ENCODE measurements at regions of chr9 and their contacts with region 1.

Region 1: DNA sequence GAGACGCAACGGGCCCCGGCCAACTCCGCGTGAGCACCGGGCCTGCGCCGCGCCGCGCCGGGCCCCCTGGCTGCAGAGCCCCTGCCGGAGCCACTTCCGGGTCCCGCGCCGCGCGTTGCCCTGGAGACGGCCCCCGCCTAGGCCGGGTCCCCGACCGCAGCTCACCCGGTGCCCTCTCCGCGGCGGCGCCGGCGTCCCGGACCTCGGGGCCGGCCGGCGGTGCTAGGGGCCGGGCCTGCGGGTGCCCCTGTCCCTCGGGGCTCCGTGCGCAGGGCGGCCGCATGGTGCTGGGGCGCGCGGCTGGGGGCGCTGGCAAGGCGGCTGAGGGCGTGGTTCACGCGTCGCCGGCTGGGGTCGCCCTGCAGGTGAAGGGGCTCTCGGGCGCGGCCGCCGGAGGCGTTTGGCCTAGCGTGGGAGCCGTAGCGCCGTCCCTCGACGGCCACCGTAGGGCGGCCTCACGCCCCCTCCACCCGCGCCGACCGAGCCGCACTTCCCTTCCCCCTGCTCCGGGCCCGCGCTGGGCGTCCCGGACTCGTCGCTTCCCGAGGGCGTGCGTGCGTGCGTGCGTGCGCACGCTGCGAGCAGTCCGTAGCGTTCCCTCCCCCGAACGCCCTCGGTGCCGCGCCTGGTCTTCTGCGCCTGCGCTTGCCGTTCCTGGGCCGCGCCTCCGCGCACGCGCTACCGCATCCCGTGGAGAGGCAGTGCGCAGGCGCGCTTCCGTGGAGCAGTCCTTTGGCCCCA is at the start of gene TMEM250:
- DNase-seq: peak; percentile 99
- ATAC-seq: peak; percentile 93
- total RNA-seq, gene TMEM250: 18.7 TPM

Region 2: GRCh38 chr9:135602789-135603481 is 515.6 kb before region 1 on chr9:
- intact Hi-C with region 1: loop called (anchors 5 kb)
- DNase-seq: peak; percentile 26
- ATAC-seq: no peak

Region 3: DNA sequence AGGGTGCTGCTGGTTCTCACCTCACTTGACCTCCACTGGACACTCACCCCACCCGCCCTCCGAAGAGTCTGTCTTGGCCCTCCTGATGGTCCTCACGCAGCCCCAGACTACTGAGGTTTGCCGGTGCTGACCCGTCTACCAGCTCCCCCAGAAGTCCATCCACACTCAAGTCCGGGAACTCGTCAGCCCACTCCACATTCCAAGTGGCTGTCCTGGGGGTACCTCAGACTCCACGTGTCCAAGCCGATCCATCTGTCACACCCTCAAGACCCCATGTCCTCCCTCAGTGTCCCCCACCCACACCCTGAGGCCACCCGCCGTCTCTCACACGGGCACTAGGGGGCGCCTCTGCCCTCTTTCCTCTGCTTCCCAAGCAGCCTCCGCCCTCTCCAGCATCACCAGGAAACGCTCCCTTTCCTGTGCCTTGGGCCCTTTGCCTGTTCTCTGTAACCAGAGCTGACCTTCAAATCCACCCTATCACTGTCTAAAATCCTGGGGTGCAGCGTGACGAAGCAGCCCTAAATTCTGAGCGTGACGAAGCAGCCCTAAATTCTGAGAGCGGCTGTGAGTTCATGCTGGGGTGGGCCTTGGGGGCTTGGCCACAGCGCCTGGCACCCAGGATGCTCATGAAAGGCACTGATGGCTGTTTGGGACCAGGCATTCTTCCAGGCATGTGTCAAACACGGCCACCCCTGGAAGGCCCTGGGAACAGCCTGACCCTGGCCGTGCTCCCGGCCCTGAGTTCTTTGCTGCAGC is 320.8 kb before region 1 on chr9:
- intact Hi-C with region 1: loop called (anchors 2 kb)
- DNase-seq: no peak
- ATAC-seq: peak; percentile 89

Region 4: DNA sequence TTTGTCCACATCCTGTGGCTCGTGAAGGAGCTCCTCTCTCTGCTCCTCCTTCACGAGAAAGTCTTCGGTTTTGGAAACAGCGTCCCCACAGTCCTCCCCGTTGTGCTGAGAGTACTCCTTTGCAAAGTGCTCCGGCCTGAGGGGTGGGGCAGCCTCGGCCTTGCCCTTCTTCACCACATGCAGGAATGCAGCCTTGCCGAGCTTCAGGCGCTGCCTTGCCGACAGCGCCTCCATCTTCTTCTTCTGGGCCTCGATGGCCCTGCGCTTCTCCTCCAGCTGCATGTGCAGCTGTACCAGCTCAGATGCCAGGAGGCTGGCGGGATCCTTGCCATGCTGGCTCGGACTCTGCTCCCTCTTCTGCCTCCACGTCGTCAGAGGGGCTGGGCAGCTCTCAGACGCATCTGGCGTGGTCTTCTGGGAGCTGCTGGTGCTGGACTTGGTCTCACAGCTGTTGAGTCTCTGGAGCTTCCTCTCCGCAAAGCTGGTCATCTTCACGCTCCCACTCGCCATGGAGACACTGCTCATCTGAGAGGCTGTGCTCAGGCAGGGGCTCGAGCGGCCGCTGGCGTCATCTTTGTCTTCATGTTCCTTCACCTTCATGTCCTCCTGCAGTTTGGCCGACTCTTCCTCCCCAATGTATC is 296.6 kb before region 1 on chr9:
- intact Hi-C with region 1: no loop called
- DNase-seq: peak; percentile 13
- ATAC-seq: no peak

Region 5: GRCh38 chr9:135950135-135950682 is 168.3 kb before region 1 on chr9:
- intact Hi-C with region 1: no loop called
- DNase-seq: peak; percentile 4
- ATAC-seq: no peak

Region 6: DNA sequence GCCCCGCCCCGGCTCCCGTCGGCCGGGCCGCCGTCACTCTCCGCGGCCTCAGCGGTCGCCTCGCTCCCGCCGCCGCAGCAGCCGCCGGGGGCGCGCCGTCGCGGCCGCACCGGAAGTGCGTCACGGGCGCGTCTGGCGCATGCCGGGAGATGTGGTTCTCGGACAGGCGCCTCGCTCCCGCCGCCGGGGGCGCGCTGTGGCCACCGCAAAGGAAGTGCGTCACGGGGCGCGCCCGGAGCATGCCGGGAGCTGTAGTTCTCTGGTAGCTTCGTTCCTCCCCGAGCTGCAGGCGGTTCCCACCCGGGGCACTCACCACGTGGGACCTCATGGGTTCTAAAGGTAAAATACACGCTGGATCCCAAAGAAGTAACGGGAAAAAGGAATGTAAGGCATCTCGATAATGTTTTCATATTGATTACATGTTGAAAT is 157.2 kb before region 1 on chr9 and contains the start of gene UBAC1:
- intact Hi-C with region 1: loop called (anchors 2 kb)
- DNase-seq: peak; percentile 99
- ATAC-seq: peak; percentile 88
- total RNA-seq, gene UBAC1: 119 TPM

Region 7: DNA sequence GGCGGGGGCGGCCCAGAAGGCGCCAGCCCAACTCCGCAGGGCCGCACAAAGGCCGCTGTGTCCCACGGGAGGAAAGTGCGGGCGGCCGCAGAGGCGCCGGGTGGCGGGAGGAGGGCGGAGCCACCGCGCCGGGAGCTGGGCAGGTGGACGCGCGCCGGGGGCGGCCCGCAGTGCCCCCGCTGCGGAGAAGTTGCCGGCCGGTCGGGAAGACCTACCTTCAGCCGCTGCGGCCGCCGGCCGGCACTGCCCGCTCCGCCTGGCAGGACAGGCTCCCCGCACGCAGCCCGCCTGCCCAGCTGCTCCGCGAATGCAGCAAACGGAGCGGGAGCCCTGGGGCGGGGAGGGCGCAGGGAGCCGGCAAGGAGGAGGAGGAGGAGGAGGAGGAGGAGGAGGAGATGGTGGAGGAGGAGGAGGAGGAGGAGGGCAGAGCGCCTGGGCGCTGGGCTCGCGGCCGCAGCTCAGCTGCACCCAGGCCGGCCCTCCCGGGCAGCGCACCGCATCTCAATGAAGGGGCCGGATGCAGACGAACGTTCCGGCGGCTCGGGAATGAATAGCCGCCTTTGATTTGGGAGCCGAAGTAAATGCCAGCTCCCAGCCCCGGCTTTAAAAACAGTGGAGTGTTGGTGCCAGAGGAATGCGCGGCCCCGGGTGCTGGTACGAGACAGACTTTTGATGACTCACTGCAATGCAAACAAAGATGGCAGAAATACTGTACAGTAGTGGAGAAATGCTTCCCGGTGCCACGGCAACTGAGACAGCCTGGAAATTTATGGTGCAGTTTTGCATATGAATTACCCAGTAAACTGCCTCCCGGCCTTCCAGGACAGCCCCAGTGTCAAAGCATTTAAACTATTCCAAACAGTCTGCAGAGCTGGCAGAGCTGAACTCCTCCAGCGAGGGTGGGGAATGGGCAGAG is 66.7 kb before region 1 on chr9:
- intact Hi-C with region 1: loop called (anchors 5 kb)
- DNase-seq: peak; percentile 88
- ATAC-seq: peak; percentile 58

Region 8: GRCh38 chr9:136093995-136094881 is 24.3 kb before region 1 on chr9:
- intact Hi-C with region 1: loop called (anchors 1 kb)
- DNase-seq: peak; percentile 91
- ATAC-seq: peak; percentile 70

Region 9: DNA sequence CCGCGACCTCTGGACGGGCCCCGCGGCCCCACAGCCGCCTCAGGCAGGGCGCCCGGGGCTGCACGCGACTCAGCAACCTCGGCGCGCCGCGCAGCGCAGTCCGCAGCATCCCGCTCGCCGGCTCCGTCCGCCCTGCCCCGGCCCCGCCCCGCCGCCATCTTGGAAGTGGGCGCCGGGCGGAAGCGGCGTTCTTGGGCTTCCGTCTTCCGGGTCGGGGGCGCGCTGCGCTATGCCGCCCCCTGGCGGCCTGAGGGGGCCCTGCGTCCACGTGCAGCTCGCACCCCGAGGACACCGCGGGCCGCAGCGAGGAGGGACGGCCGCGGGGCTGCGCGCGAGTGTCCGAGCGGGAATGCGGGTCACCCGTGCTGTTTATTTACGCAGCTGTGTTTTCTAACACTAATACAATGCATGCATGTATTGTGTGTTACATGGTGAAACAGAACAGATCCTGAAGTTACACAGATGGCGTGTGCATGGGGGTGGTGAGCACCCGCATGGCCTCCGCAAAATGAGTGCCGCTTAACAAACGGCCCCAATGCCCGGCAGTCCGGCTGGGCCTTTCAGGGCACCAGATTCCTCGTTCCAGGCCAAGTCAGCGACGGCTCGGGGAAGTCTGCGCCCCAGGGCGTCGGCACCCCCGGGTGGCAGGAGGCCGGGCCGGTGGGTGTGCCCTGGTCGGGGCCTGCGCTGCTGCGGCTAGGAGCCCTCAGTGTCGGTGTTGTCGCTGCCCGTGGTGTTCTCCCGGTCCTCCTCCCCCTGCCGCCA is 245.3 kb after region 1 on chr9 and contains the start of gene DNLZ:
- intact Hi-C with region 1: no loop called
- DNase-seq: peak; percentile 95
- ATAC-seq: peak; percentile 63
- total RNA-seq, gene DNLZ: 40.6 TPM